ENCODE measurements at regions of chr12 and their contacts with region 1.

Region 1: DNA sequence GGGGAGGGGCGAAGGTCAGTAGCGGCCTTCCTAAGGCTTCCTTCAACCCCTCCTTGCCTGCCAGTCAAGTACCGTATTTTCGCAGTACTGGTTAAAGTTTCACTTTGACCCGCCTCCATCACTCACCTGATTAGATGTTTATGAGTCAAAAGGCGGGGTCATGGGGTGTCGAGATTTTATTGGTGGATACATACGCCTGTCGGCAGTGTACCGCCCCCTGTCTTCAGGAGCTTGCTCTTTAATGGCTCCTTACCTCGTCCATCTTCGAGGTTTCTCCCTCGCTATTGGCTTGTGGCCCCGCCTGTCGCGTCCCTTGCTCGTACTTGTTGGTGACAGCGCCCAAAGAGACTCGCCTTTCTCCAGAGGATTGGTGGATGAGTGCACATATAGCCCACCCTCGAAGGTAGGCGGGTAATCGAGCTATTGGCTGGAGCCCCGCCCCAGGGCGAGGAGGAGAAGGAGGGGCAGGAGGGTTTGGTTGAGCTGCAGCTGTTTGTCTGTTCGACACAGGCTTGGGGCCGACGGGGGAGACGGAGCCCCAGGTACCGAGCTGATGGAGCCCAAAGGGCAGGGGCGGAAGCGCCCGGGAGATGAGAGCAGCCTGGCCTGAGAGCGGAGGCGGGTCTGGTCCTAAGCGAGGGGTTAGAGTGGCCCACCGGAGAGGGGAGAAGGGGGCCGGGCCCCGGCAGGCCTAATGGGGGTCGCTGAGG is at the start of gene RAB5B:
- H3K4me3 ChIP-seq: peak within 1 kb of the TSS; percentile 87
- H3K27ac ChIP-seq: peak within 1 kb of the TSS; percentile 83
- H3K4me1 ChIP-seq: peaks cover 4% of the 10 kb centered on the region; the same call in 1 of the 2 replicates
- CTCF ChIP-seq: no peak

Region 2: GRCh38 chr12:55817346-55818139 is 156.2 kb before region 1 on chr12 and contains the starts of genes ORMDL2 and SARNP:
- CTCF ChIA-PET with region 1: no interaction called
- POLR2A ChIA-PET with region 1: interaction called, 17 read pairs
- H3K4me3 ChIP-seq: peak within 1 kb of the TSS; percentile 83
- H3K27ac ChIP-seq: peak within 1 kb of the TSS; percentile 72
- H3K4me1 ChIP-seq: peaks cover 6% of the 10 kb centered on the region; the same call in 1 of the 2 replicates
- CTCF ChIP-seq: no peak

Region 3: DNA sequence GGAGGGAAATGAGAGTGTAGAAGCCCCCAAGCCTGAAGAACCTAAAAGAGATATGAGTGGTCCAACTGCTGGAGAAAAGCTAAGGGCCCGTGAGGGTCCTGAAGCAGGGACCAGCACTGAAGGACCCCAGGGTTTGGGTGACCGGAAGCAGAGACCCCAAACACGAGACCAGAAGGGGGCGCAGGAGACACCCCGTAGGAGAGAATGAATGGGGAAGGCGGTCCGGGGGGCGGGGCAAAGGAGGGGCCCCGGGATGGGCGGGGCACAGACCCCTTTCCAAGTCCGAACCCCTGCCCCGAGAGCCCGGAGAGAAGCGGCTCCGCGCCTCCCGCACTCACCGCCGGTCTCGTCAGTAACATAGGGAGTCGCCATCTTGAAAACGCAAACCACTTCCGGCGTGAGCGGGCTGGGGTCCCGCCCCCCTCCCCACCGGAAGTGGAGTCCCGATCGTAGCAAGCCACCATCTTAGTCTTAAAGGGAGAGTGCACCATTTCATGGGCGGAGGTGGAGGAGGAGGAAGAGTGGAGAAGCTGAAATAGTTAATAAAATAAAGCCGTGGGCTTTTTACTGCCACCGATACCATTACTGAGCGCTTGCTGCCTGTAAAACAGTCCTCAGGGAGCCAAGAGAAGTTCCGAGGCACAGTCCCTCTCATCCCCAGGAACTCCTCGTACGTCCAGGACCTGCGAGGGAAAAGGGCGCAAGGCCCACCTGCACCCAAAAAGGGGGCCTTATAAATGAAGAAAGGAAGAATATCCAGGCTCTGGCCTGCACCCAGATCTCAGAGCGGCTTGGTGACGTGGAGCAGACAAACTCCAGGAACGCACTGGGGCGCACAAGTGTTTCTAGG is 46.8 kb before region 1 on chr12:
- CTCF ChIA-PET with region 1: interaction called, 4 read pairs
- POLR2A ChIA-PET with region 1: interaction called, 20 read pairs
- H3K4me3 ChIP-seq: peak overlapping the region; percentile 80
- H3K27ac ChIP-seq: peak overlapping the region; percentile 94
- H3K4me1 ChIP-seq: peaks cover 4% of the 10 kb centered on the region; the same call in 1 of the 2 replicates
- CTCF ChIP-seq: peak; percentile 91

Region 4: GRCh38 chr12:55955800-55956508 is 17.8 kb before region 1 on chr12:
- CTCF ChIA-PET with region 1: interaction called, 7 read pairs
- POLR2A ChIA-PET with region 1: interaction called, 22 read pairs
- H3K4me3 ChIP-seq: no peak overlapping the region
- H3K27ac ChIP-seq: no peak overlapping the region
- H3K4me1 ChIP-seq: no peaks in the 10 kb centered on the region
- CTCF ChIP-seq: peak; percentile 50

Region 5: DNA sequence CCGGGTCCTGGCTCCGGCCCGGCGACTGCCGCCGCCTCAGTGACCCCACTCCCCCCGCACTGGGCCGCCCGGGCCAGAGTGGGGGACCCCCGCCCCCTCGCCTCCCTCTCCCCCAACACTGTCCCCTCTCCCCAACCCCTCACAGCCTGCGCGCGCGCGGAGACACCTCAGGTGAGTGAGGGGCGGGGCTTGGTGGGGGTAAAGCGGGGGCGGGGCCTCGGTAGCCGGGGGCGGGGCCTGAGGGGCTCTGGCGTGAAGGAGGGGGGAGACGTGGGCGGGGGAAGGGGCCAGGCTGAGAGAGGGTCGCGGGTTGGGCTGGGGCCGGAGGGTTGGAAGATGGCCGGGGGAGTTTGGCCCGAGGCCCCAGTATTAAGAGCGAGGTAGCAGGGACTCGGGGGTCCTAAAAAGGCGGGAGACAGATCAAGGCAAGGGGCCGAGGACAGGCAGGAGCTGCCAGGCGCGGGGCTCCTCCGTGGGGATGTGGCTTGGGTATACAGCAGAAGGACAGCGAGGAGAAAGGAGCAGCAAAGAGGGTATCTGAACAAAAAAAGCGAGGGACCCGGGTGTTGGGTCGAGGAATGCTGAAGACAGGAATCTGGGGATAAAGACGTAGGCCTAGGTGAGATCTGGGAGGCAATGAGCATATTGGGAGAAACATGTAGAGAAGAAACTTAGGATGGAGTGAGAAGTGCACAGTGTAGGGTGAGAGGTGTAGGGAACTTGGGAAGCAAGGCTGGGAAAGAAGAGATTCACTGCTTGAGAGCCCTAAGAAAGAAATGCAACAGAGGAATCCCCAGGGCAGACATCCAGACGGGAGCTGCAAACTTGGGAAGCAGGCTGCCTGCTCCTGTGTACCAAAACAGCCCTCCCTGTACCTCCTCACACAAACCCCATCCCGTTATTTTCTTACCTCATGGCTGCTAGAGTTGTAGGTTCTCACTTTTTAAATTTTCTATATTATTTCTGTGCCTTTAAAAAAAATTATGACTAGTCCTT is 34.1 kb after region 1 on chr12:
- CTCF ChIA-PET with region 1: no interaction called
- POLR2A ChIA-PET with region 1: interaction called, 18 read pairs
- H3K4me3 ChIP-seq: peak overlapping the region; percentile 51
- H3K27ac ChIP-seq: peak overlapping the region; percentile 70
- H3K4me1 ChIP-seq: no peaks in the 10 kb centered on the region; the same call in 1 of the 2 replicates
- CTCF ChIP-seq: no peak

Region 6: GRCh38 chr12:56104109-56104814 is 130.5 kb after region 1 on chr12 and contains the start of gene PA2G4:
- CTCF ChIA-PET with region 1: no interaction called
- POLR2A ChIA-PET with region 1: interaction called, 16 read pairs
- H3K4me3 ChIP-seq: peak within 1 kb of the TSS; percentile 82
- H3K27ac ChIP-seq: peak within 1 kb of the TSS; percentile 90
- H3K4me1 ChIP-seq: 0 out of 2 replicates have a peak, but pooled peaks cover 2% of the 10 kb centered on the region
- CTCF ChIP-seq: no peak; the same call in 1 of the 2 replicates

Region 7: GRCh38 chr12:56568146-56568545 is 594.4 kb after region 1 on chr12:
- CTCF ChIA-PET with region 1: no interaction called
- POLR2A ChIA-PET with region 1: no interaction called
- H3K4me3 ChIP-seq: no peak overlapping the region
- H3K27ac ChIP-seq: no peak overlapping the region
- H3K4me1 ChIP-seq: no peaks in the 10 kb centered on the region; the same call in 1 of the 2 replicates
- CTCF ChIP-seq: no peak

Measured in HEK293 (cell line).